Naive thymus-derived CD4-positive, alpha-beta T cell (primary cell): ENCODE measurements at regions of chr4 and their contacts with region 1.

Region 1: GRCh38 chr4:15001869-15002658 is at the start of gene CPEB2:
- DNase-seq: peak; percentile 88 to 95 (median 93)
- ATAC-seq: peak; percentile 81
- H3K4me3 ChIP-seq: peak within 1 kb of the TSS; percentile 99
- H3K4me3 Mint-ChIP-seq: peak within 1 kb of the TSS; percentile 86 to 95 (median 93)
- H3K27ac ChIP-seq: peak within 1 kb of the TSS; percentile 100
- H3K27ac Mint-ChIP-seq: peak within 1 kb of the TSS; percentile 90 to 98 (median 97)
- H3K4me1 ChIP-seq: peaks cover 7 to 10% of the 10 kb centered on the region in 2 donors
- H3K4me1 Mint-ChIP-seq: peaks cover 17 to 29% (median 24%) of the 10 kb centered on the region in 7 donors
- H3K27me3 ChIP-seq: no peaks in the 10 kb centered on the region
- H3K27me3 Mint-ChIP-seq: no peaks in the 10 kb centered on the region
- total RNA-seq, gene CPEB2: 11.1 to 21.7 (median 14.9) TPM

Region 2: GRCh38 chr4:13627606-13628301 is 1374.3 kb before region 1 on chr4 and contains the start of gene BOD1L1:
- CTCF ChIA-PET with region 1: no interaction called
- POLR2A ChIA-PET with region 1: interaction called, 6 read pairs
- intact Hi-C with region 1: loop called (anchors 1 kb)
- DNase-seq: peak; percentile 63 to 86 (median 75)
- ATAC-seq: peak; percentile 88
- H3K4me3 ChIP-seq: peak within 1 kb of the TSS; percentile 96
- H3K4me3 Mint-ChIP-seq: peak within 1 kb of the TSS; percentile 83 to 100 (median 97)
- H3K27ac ChIP-seq: peak within 1 kb of the TSS; percentile 87
- H3K27ac Mint-ChIP-seq: peak within 1 kb of the TSS; percentile 94 to 100 (median 98)
- H3K4me1 ChIP-seq: peaks cover 17 to 24% of the 10 kb centered on the region in 2 donors
- H3K4me1 Mint-ChIP-seq: peaks cover 26 to 55% (median 51%) of the 10 kb centered on the region in 7 donors
- H3K27me3 ChIP-seq: no peaks in the 10 kb centered on the region
- H3K27me3 Mint-ChIP-seq: no peaks in the 10 kb centered on the region
- total RNA-seq, gene BOD1L1: 44.5 to 76.7 (median 54.2) TPM

Region 3: DNA sequence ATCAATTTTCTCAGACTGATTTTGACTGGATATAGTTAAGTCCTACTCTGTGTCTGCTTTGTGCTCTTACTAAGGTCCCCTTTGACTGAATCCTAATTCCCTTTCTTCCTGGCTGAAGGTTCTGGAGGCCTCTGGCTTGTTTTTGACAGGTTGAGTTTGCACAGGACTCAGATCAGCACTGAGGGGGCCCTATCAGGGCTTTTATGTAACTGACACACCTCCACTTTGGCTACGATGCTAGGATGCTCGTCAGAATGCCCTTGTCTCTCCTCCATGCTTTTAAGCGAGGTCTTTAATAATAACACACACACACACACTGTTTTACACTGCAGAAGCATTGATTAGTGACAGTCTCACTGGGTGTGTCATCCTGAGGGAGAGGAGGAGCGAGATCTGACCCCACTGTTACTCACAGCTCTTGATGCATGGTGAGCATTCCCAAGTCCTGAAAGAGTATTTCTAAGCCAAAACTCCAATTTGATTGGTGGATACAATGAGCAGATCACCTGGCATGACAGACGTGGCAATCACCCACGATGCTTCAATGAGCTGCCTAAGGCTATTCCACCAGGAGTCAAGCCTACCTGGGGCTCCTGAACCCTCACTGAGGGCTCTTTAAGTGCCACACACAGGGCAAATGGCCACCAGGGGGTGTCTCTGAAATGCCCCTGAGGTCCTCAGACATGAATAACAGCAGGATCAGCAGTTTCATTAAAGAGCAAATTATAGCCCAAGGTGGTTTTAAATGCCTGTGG is 130.2 kb before region 1 on chr4:
- CTCF ChIA-PET with region 1: no interaction called
- POLR2A ChIA-PET with region 1: interaction called, 3 read pairs
- intact Hi-C with region 1: loop called (anchors 1 to 5 kb)
- DNase-seq: peak in 2 of 9 donors; percentile 5 to 9
- ATAC-seq: peak; percentile 42
- H3K4me3 ChIP-seq: no peak overlapping the region
- H3K4me3 Mint-ChIP-seq: no peak overlapping the region
- H3K27ac ChIP-seq: no peak overlapping the region
- H3K27ac Mint-ChIP-seq: no peak overlapping the region
- H3K4me1 ChIP-seq: peaks cover 2 to 5% of the 10 kb centered on the region in 2 donors
- H3K4me1 Mint-ChIP-seq: peaks cover 6 to 19% (median 13%) of the 10 kb centered on the region in 7 donors
- H3K27me3 ChIP-seq: no peaks in the 10 kb centered on the region
- H3K27me3 Mint-ChIP-seq: peaks cover 4 to 14% (median 7%) of the 10 kb centered on the region in 5 donors

Region 4: DNA sequence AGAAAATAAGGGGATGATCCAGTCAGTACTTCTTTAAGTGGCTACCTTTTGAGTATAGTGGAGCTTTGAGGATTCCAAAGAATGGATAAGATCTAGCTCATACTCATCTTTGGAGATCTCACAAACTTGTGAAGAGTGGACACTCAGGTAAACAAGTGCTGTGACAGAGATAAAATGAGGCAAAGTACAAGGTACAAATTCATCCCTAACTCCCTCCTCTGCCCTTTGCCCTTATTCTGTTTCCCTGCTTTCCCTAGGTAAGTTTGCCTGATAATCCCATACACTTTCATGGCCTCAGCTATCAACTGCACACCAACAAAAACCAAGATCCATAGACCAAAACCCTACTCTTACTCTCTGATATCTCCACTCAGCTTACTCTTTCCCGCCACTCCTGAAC is 16.2 kb before region 1 on chr4:
- CTCF ChIA-PET with region 1: interaction called, 5 read pairs
- POLR2A ChIA-PET with region 1: interaction called, 3 read pairs
- intact Hi-C with region 1: loop called in 1 of 2 experiments (anchors 1 kb)
- DNase-seq: no peak
- ATAC-seq: no peak
- H3K4me3 ChIP-seq: no peak overlapping the region
- H3K4me3 Mint-ChIP-seq: no peak overlapping the region
- H3K27ac ChIP-seq: no peak overlapping the region
- H3K27ac Mint-ChIP-seq: no peak overlapping the region
- H3K4me1 ChIP-seq: no peaks in the 10 kb centered on the region
- H3K4me1 Mint-ChIP-seq: peaks cover 0 to 5% (median 0%) of the 10 kb centered on the region in 7 donors
- H3K27me3 ChIP-seq: no peaks in the 10 kb centered on the region
- H3K27me3 Mint-ChIP-seq: peaks cover 0 to 20% (median 8%) of the 10 kb centered on the region in 5 donors

Region 5: DNA sequence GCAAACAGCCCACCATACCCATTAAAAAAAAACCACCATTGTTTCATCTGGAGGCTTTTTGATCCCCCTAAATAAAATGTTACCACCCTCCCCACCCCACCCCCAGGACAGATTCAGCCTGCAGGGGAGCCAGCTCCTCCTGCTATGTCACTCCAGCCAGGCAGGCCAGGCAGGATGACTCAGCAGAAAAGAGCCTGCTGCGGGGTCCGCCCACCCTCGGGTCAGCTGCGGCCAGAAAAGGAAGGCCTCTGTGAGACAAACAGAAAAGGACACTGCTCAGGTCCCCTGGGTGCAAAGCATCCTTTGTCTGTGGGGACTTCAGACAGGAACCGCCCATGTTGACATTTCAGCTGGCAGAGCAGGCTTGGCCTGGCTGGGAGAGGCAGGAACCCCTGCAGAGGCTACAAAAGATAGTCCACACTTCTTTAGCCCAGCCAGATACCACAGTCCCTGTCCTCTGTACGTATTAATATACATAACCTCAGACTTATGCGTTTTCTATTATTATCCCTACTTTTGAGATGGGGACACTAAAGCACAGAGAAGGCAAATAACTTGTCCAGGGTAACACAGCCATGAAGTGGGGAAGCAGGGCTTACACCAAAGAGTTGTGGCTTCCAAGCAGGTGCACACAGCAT is 147.9 kb after region 1 on chr4:
- CTCF ChIA-PET with region 1: no interaction called
- POLR2A ChIA-PET with region 1: no interaction called
- intact Hi-C with region 1: no loop called
- DNase-seq: no peak
- ATAC-seq: peak; percentile 55
- H3K4me3 ChIP-seq: no peak overlapping the region
- H3K4me3 Mint-ChIP-seq: no peak overlapping the region
- H3K27ac ChIP-seq: no peak overlapping the region
- H3K27ac Mint-ChIP-seq: no peak overlapping the region
- H3K4me1 ChIP-seq: no peaks in the 10 kb centered on the region
- H3K4me1 Mint-ChIP-seq: no peaks in the 10 kb centered on the region
- H3K27me3 ChIP-seq: no peaks in the 10 kb centered on the region
- H3K27me3 Mint-ChIP-seq: peaks cover 0 to 14% (median 4%) of the 10 kb centered on the region in 5 donors

Region 6: GRCh38 chr4:15410750-15411149 is 408.7 kb after region 1 on chr4:
- CTCF ChIA-PET with region 1: no interaction called
- POLR2A ChIA-PET with region 1: no interaction called
- intact Hi-C with region 1: loop called in 1 of 2 experiments (anchors 2 kb)
- DNase-seq: peak in 6 of 9 donors; percentile 30 to 56 (median 42)
- ATAC-seq: peak; percentile 71
- H3K4me3 ChIP-seq: peak overlapping the region; percentile 41
- H3K4me3 Mint-ChIP-seq: peak overlapping the region; percentile 43 to 82 (median 70)
- H3K27ac ChIP-seq: peak overlapping the region; percentile 41
- H3K27ac Mint-ChIP-seq: peak overlapping the region in 8 of 9 donors; percentile 73 to 93 (median 85)
- H3K4me1 ChIP-seq: peaks cover 12 to 46% of the 10 kb centered on the region in 2 donors
- H3K4me1 Mint-ChIP-seq: peaks cover 25 to 68% (median 63%) of the 10 kb centered on the region in 7 donors
- H3K27me3 ChIP-seq: no peaks in the 10 kb centered on the region
- H3K27me3 Mint-ChIP-seq: peaks cover 0 to 3% (median 0%) of the 10 kb centered on the region in 5 donors

Region 7: GRCh38 chr4:15756361-15756861 is 754.3 kb after region 1 on chr4:
- CTCF ChIA-PET with region 1: no interaction called
- POLR2A ChIA-PET with region 1: no interaction called
- intact Hi-C with region 1: loop called in 1 of 2 experiments (anchors 2 kb)
- DNase-seq: peak; percentile 33 to 83 (median 78)
- ATAC-seq: peak; percentile 89
- H3K4me3 ChIP-seq: peak overlapping the region; percentile 41
- H3K4me3 Mint-ChIP-seq: peak overlapping the region; percentile 64 to 92 (median 76)
- H3K27ac ChIP-seq: peak overlapping the region; percentile 39
- H3K27ac Mint-ChIP-seq: peak overlapping the region; percentile 81 to 98 (median 93)
- H3K4me1 ChIP-seq: peaks cover 35 to 36% of the 10 kb centered on the region in 2 donors
- H3K4me1 Mint-ChIP-seq: peaks cover 43 to 69% (median 62%) of the 10 kb centered on the region in 7 donors
- H3K27me3 ChIP-seq: no peaks in the 10 kb centered on the region
- H3K27me3 Mint-ChIP-seq: no peaks in the 10 kb centered on the region

Region 8: DNA sequence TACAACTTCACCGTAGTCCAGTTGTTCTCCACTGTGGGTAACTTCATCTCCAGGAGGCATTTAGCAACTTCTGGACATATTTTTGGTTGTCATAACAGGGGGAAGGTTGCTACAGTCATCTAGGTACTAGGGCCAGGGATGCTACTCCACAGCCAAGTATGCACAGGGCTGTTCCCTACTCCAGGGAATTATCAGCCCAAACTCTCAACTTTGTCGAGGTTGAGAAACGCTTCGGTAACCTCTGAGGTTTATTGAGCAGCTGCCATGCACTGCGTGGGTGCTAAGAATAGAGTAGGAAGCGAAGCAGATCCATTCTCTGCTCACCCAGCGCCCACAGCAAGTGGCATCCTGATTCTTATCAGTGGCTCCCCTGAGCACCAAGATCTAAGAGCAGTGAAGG is 928.2 kb after region 1 on chr4:
- CTCF ChIA-PET with region 1: no interaction called
- POLR2A ChIA-PET with region 1: no interaction called
- intact Hi-C with region 1: no loop called
- DNase-seq: no peak
- ATAC-seq: no peak
- H3K4me3 ChIP-seq: no peak overlapping the region
- H3K4me3 Mint-ChIP-seq: no peak overlapping the region
- H3K27ac ChIP-seq: no peak overlapping the region
- H3K27ac Mint-ChIP-seq: peak overlapping the region in 1 of 9 donors; percentile 33
- H3K4me1 ChIP-seq: no peaks in the 10 kb centered on the region
- H3K4me1 Mint-ChIP-seq: peaks cover 0 to 5% (median 0%) of the 10 kb centered on the region in 7 donors
- H3K27me3 ChIP-seq: no peaks in the 10 kb centered on the region
- H3K27me3 Mint-ChIP-seq: peaks cover 0 to 33% (median 9%) of the 10 kb centered on the region in 5 donors